Activated B cell treated with CpG ODN at 0.5 μM for 24 hours (primary cell): ENCODE measurements at regions of chr16 and their contacts with region 1.

Region 1: GRCh38 chr16:47492428-47493377 is 31.6 kb downstream of the PHKB start:
- DNase-seq: peak; percentile 53
- ATAC-seq: peak; percentile 91
- H3K4me3 Mint-ChIP-seq: peak overlapping the region; percentile 89
- H3K27ac Mint-ChIP-seq: peak overlapping the region; percentile 98
- H3K4me1 Mint-ChIP-seq: peaks cover 52% of the 10 kb centered on the region
- H3K27me3 Mint-ChIP-seq: no peaks in the 10 kb centered on the region
- CTCF ChIP-seq: no peak

Region 2: DNA sequence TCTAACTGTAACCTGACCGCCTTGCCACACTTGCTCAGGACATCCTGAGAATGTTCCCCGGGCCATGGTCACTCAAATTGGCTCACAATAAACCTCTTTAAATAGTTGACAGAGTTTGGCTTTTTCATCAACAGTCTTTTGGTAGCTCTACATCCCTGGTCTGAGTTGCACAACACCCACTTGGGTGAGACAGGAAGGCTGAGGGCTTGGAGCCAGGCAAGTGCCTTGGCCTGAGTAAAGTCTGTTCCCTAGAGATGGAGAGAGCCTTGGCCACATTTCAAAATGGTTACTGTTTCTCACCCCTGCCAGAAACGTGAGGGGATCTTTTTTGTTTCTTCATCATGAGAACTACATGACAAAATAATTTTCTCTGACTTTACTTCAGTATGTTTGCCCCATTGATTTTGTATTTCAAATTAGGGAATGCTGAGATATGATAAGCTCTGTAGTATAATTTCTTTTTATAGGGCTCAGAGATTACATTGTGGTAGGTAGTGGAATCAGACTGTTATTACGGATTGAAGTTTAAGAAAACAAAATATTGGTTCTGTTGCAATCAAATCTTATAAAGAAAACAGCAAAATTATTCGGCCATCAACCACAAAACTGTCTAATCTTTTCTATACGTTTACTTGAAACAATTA is 295.0 kb before region 1 on chr16:
- CTCF ChIA-PET with region 1: no interaction called
- POLR2A ChIA-PET with region 1: no interaction called
- intact Hi-C with region 1: no loop called
- DNase-seq: no peak
- ATAC-seq: no peak
- H3K4me3 Mint-ChIP-seq: no peak overlapping the region
- H3K27ac Mint-ChIP-seq: no peak overlapping the region
- H3K4me1 Mint-ChIP-seq: no peaks in the 10 kb centered on the region
- H3K27me3 Mint-ChIP-seq: no peaks in the 10 kb centered on the region
- CTCF ChIP-seq: no peak

Region 3: DNA sequence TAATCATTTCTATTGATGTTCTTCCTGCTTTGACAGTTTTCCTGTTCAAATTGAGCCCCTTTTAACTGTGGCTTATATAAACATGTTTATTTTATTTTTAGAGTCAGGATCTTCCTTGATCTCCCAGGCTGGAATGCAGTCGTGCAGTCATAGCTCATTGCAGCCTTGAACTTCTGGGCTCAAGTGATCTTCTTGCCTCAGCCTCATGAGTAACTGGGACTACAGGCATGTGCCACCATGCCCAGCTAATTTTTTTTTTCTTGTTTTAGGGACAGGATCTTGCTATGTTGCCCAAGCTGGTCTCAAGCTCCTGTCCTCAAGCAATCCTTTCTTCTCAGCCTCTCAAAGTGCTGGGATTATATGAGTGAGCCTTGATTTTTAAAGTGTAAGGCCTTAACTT is 16.9 kb before region 1 on chr16:
- CTCF ChIA-PET with region 1: no interaction called
- POLR2A ChIA-PET with region 1: interaction called, 36 read pairs
- intact Hi-C with region 1: loop called (anchors 2 kb)
- DNase-seq: no peak
- ATAC-seq: no peak
- H3K4me3 Mint-ChIP-seq: no peak overlapping the region
- H3K27ac Mint-ChIP-seq: peak overlapping the region; percentile 24
- H3K4me1 Mint-ChIP-seq: peaks cover 43% of the 10 kb centered on the region
- H3K27me3 Mint-ChIP-seq: no peaks in the 10 kb centered on the region
- CTCF ChIP-seq: no peak

Region 4: DNA sequence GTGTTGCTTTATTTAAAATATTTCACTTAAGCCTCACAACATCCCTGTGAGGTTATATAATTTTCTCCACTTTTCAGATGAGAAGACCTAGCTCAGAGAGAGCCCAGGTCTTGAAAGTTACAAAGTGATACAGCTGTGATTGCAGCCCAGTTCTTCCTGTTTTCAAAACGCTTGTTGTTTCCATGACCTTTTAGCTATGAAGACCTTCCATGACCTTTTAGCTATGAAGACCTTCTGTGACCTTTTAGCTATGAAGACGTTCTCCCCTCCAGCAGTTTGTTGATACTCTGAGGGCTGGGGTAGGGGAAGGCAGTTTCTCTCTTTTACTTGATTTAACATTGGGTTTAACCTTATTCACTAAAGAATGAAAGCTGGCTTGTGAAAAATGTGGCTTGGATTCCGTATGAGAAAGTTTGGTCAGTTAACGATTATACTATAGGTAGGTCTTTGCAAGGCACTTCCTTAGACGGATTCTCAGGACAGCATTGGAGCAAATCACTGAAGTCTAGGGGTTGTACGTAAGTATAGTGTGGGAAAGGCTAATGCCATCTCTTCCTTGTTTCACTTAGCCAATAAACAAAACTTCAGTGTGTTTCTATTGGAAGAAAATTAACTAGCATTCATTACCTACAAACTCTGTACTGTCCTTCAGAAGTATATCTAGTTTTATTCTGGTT is 10.9 kb before region 1 on chr16:
- CTCF ChIA-PET with region 1: no interaction called
- POLR2A ChIA-PET with region 1: interaction called, 36 read pairs
- intact Hi-C with region 1: loop called (anchors 1 kb)
- DNase-seq: no peak
- ATAC-seq: peak; percentile 82
- H3K4me3 Mint-ChIP-seq: peak overlapping the region; percentile 44
- H3K27ac Mint-ChIP-seq: peak overlapping the region; percentile 83
- H3K4me1 Mint-ChIP-seq: peaks cover 64% of the 10 kb centered on the region
- H3K27me3 Mint-ChIP-seq: no peaks in the 10 kb centered on the region
- CTCF ChIP-seq: no peak

Region 5: DNA sequence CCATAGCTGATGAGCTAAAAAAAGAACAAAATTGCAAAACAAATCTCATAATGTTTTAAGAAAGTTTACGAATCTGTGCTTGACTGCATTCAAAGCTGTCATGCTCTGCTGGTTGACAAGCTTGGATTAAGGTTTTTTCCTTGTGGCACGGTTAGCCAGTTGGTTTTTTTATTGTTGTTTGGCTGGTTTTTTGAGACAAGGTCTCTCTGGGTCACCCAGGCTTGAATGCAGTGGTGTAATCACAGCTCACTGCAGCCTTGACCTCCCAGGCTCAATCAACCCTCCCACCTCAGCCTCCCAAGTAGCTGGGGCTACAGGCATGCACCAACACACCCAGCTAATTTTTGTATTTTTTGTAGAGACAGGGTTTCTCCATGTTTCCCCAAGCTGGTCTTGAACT is 14.1 kb after region 1 on chr16:
- CTCF ChIA-PET with region 1: no interaction called
- POLR2A ChIA-PET with region 1: interaction called, 10 read pairs
- intact Hi-C with region 1: no loop called
- DNase-seq: no peak
- ATAC-seq: no peak
- H3K4me3 Mint-ChIP-seq: no peak overlapping the region
- H3K27ac Mint-ChIP-seq: peak overlapping the region; percentile 46
- H3K4me1 Mint-ChIP-seq: peaks cover 20% of the 10 kb centered on the region
- H3K27me3 Mint-ChIP-seq: no peaks in the 10 kb centered on the region
- CTCF ChIP-seq: no peak

Region 6: DNA sequence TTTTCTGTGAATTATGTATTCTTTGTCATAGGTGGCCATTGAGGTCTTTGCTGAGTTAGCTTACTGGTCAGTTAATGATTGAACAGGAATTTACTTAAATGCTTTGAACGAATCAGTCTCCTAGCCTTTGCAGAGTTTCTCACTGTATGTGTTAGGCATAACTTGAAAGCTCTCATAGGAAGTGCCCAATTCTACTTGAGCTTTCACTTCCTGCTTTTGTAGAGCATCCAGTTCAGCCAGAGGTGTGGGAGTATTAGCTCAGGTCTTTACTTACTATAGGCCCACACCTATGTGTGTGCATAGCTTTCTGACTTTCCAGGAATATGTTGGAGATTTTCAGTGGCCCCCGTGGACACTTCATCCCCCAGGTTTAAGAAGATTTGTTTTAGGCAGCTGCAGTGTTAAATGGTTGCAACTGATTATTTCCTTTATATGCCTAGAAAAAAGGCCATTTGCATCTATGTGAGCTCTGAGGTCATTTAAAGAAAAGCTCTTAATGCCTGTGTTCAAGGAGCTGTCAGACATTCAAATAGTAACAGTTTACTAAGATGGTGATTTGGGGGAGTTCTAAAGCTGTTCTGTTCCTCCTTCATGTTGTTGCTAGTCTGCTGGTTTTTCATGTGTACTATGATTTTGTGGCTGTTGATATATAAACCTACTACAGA is 30.8 kb after region 1 on chr16:
- CTCF ChIA-PET with region 1: interaction called, 3 read pairs
- POLR2A ChIA-PET with region 1: interaction called, 24 read pairs
- intact Hi-C with region 1: loop called (anchors 2 kb)
- DNase-seq: no peak
- ATAC-seq: peak; percentile 98
- H3K4me3 Mint-ChIP-seq: peak overlapping the region; percentile 3
- H3K27ac Mint-ChIP-seq: peak overlapping the region; percentile 83
- H3K4me1 Mint-ChIP-seq: peaks cover 17% of the 10 kb centered on the region
- H3K27me3 Mint-ChIP-seq: no peaks in the 10 kb centered on the region
- CTCF ChIP-seq: no peak

Region 7: DNA sequence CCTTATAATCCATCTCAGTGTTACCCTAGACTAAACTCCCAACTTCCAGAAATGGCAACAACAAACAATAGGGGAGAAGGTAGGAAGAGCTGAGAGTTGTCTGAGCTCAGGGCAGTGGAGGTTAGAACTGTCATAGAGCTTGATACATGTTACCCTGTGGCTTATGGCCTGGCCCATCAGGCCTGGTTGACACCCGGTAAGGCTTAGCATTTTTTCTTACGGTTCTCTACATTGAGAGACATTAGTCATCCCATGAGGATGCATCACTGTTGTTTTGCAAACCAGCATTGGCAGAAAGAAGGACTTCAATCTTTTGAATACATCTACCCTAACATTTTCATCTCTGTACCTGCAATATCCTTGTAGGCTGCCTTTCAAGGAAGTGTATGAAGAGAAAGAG is 195.0 kb after region 1 on chr16:
- CTCF ChIA-PET with region 1: no interaction called
- POLR2A ChIA-PET with region 1: no interaction called
- intact Hi-C with region 1: no loop called
- DNase-seq: no peak
- ATAC-seq: no peak
- H3K4me3 Mint-ChIP-seq: no peak overlapping the region
- H3K27ac Mint-ChIP-seq: no peak overlapping the region
- H3K4me1 Mint-ChIP-seq: no peaks in the 10 kb centered on the region
- H3K27me3 Mint-ChIP-seq: no peaks in the 10 kb centered on the region
- CTCF ChIP-seq: no peak

Region 8: GRCh38 chr16:47697826-47698225 is 205.1 kb after region 1 on chr16:
- CTCF ChIA-PET with region 1: no interaction called
- POLR2A ChIA-PET with region 1: no interaction called
- intact Hi-C with region 1: no loop called
- DNase-seq: no peak
- ATAC-seq: no peak
- H3K4me3 Mint-ChIP-seq: no peak overlapping the region
- H3K27ac Mint-ChIP-seq: no peak overlapping the region
- H3K4me1 Mint-ChIP-seq: no peaks in the 10 kb centered on the region
- H3K27me3 Mint-ChIP-seq: no peaks in the 10 kb centered on the region
- CTCF ChIP-seq: no peak